Calu3 (cell line): ENCODE measurements at regions of chr1 and their contacts with region 1.

Region 1: GRCh38 chr1:6199298-6200187 is at the start of gene RPL22:
- DNase-seq: peak; percentile 93
- H3K4me3 Mint-ChIP-seq: peak within 1 kb of the TSS; percentile 79
- H3K27ac Mint-ChIP-seq: peak within 1 kb of the TSS; percentile 87
- H3K4me1 Mint-ChIP-seq: peaks cover 19% of the 10 kb centered on the region
- H3K27me3 Mint-ChIP-seq: no peaks in the 10 kb centered on the region
- CTCF ChIP-seq: no peak
- total RNA-seq, gene RPL22: 256 and 259 TPM in 2 replicates

Region 2: GRCh38 chr1:5975133-5975880 is 224.2 kb before region 1 on chr1:
- CTCF ChIA-PET with region 1: no interaction called
- intact Hi-C with region 1: no loop called
- DNase-seq: peak; percentile 63
- H3K4me3 Mint-ChIP-seq: no peak overlapping the region
- H3K27ac Mint-ChIP-seq: no peak overlapping the region
- H3K4me1 Mint-ChIP-seq: peaks cover 12% of the 10 kb centered on the region
- H3K27me3 Mint-ChIP-seq: no peaks in the 10 kb centered on the region
- CTCF ChIP-seq: peak; percentile 47

Region 3: GRCh38 chr1:5986018-5986417 is 213.5 kb before region 1 on chr1:
- CTCF ChIA-PET with region 1: no interaction called
- intact Hi-C with region 1: no loop called
- DNase-seq: no peak
- H3K4me3 Mint-ChIP-seq: no peak overlapping the region
- H3K27ac Mint-ChIP-seq: no peak overlapping the region
- H3K4me1 Mint-ChIP-seq: no peaks in the 10 kb centered on the region
- H3K27me3 Mint-ChIP-seq: no peaks in the 10 kb centered on the region
- CTCF ChIP-seq: no peak

Region 4: GRCh38 chr1:6059866-6060265 is 139.7 kb before region 1 on chr1:
- CTCF ChIA-PET with region 1: no interaction called
- intact Hi-C with region 1: no loop called
- DNase-seq: no peak
- H3K4me3 Mint-ChIP-seq: no peak overlapping the region
- H3K27ac Mint-ChIP-seq: no peak overlapping the region
- H3K4me1 Mint-ChIP-seq: no peaks in the 10 kb centered on the region
- H3K27me3 Mint-ChIP-seq: peaks cover 15% of the 10 kb centered on the region
- CTCF ChIP-seq: no peak

Region 5: GRCh38 chr1:6220241-6220640 is 20.7 kb after region 1 on chr1:
- CTCF ChIA-PET with region 1: interaction called, 14 read pairs
- intact Hi-C with region 1: no loop called
- DNase-seq: peak; percentile 78
- H3K4me3 Mint-ChIP-seq: peak overlapping the region; percentile 28
- H3K27ac Mint-ChIP-seq: peak overlapping the region; percentile 83
- H3K4me1 Mint-ChIP-seq: peaks cover 60% of the 10 kb centered on the region
- H3K27me3 Mint-ChIP-seq: no peaks in the 10 kb centered on the region
- CTCF ChIP-seq: no peak

Region 6: GRCh38 chr1:6300342-6301048 is 101.0 kb after region 1 on chr1:
- CTCF ChIA-PET with region 1: no interaction called
- intact Hi-C with region 1: no loop called
- DNase-seq: peak; percentile 28
- H3K4me3 Mint-ChIP-seq: peak overlapping the region; percentile 54
- H3K27ac Mint-ChIP-seq: peak overlapping the region; percentile 7
- H3K4me1 Mint-ChIP-seq: peaks cover 21% of the 10 kb centered on the region
- H3K27me3 Mint-ChIP-seq: no peaks in the 10 kb centered on the region
- CTCF ChIP-seq: no peak